Aorta (tissue), 5 donors: ENCODE measurements at regions of chr3 and their contacts with region 1.

Region 1: DNA sequence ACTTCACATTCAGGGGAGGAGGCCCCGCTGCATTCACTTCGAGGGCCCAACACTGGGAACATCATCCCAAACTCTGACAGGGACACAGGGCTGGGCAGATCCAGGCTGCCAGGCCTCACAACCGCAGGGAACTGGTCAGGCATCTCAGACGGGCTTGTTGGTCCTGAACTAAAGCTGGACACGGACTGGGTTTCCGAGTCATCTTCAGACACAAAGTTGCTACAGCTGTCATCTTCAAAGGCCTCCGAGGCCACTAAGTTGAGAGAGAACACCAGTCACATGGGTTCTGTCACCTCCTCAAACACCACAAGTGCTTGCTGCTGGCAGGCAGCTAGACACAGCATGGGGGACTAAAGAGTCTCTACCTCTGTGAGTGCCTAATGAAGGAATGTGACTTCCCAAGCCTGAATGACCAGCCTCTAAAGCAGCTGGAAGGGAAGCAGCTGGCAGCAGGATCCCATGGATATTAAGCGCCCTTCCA is 50.9 kb downstream of the CAPN7 start:
- DNase-seq: no peak
- ATAC-seq: peak; percentile 22
- H3K4me3 ChIP-seq: no peak overlapping the region
- H3K27ac ChIP-seq: peak overlapping the region in 1 of 2 donors; percentile 1
- H3K4me1 ChIP-seq: no peaks in the 10 kb centered on the region
- H3K27me3 ChIP-seq: no peaks in the 10 kb centered on the region

Region 2: GRCh38 chr3:15223685-15224572 is 33.0 kb before region 1 on chr3:
- intact Hi-C with region 1: loop called in 1 of 2 experiments (anchors 5 kb)
- DNase-seq: no peak
- ATAC-seq: no peak
- H3K4me3 ChIP-seq: no peak overlapping the region
- H3K27ac ChIP-seq: no peak overlapping the region
- H3K4me1 ChIP-seq: no peaks in the 10 kb centered on the region
- H3K27me3 ChIP-seq: no peaks in the 10 kb centered on the region

Region 3: DNA sequence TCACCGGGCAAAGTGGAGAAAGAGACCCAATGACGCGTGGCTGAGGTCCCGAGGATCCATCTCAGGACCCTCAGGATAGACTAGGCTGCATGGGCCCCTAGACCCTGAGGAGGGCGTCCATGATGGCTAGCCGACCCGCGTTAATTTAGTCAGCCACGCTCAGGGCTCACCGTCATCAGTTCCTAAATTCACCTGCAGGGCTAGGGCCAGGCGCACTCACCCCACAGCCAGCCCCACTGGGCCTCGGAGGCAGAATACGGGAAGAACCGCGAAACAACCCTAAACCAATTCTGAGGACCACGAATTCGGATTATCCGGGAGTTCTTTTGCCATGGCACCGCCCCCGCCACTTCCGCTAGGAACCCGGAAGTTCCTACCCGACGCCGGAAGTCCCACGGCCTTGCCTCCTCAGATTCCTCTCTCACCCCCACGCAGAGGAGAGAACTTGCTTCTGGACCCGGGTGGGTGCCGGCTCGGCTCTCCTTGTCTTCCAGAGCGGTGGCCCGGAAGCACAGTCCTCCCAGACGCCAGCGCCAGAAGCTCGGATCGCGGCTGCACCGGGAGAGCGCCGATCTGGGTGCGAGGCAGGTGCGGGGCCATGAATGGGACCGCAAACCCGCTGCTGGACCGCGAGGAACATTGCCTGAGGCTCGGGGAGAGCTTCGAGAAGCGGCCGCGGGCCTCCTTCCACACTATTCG is 170.4 kb after region 1 on chr3 and contains the starts of genes EAF1 and METTL6:
- intact Hi-C with region 1: no loop called
- DNase-seq: peak; percentile 91 to 95
- ATAC-seq: peak; percentile 93
- H3K4me3 ChIP-seq: peak within 1 kb of the TSS; percentile 74 to 89
- H3K27ac ChIP-seq: peak within 1 kb of the TSS; percentile 31 to 72
- H3K4me1 ChIP-seq: peaks cover 1 to 4% of the 10 kb centered on the region in 2 donors
- H3K27me3 ChIP-seq: no peaks in the 10 kb centered on the region
- total RNA-seq, gene EAF1: 18.2 to 19.4 TPM
- total RNA-seq, gene METTL6: 13.3 to 16.0 TPM

Region 4: DNA sequence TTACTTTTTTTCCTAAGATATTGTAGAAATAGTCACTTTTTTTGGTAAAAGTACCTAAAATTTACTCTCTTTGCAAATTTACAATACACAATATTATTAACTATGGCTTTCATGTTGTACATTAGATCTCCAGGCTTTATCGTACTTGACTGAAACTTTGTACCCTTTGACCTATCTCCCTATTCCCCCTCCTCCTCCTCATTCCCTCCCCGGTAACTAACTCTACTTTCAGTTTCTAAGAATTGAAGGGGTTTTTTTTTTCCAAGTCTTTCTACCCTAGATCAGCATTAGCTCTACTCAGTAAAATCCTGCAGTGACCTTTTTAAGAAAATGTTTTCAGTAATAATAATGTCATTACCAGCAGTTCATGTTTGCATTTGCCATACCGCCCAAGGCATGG is 334.3 kb after region 1 on chr3:
- intact Hi-C with region 1: loop called in 1 of 2 experiments (anchors 10 kb)
- DNase-seq: no peak
- ATAC-seq: no peak
- H3K4me3 ChIP-seq: no peak overlapping the region
- H3K27ac ChIP-seq: no peak overlapping the region
- H3K4me1 ChIP-seq: no peaks in the 10 kb centered on the region
- H3K27me3 ChIP-seq: no peaks in the 10 kb centered on the region